Caco-2 (cell line): ENCODE measurements at regions of chr12 and their contacts with region 1.

Region 1: DNA sequence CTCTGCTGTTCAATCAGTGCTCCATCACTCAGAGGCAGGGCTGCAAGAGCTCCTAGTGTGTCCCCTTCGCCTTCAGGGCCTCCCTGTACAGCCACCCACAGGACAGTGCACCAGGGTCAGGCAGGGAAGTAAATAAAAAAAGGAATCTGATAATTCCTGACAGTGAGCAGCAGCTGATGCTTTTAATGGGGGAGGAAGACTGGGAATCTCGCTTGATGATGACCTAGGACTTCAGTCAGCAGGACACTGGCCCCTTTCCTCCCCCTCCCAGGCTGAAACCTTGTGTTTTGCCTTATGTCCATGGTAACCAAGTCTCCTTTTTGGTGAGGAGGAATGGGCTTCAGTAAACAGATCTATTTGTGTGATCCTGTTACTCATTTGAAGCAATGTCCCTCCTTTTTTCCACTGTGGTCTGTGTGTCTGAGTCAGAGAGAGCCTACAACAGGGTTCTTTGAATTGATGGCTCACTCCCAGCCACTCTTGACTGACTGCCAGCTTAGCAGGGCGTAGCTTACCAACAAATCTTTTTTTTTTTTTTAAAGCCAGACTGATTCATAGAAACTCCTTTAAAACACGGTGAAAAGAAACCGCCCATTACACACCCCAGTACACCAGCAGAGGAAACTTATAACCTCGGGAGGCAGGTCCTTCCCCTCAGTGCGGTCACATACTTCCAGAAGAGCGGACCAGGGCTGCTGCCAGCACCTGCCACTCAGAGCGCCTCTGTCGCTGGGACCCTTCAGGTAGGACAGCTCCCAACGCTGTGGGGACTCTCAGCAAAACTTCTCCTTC is at the start of gene EMP1:
- DNase-seq: peak; percentile 67 to 83
- H3K4me3 ChIP-seq: no peak within 1 kb of the TSS
- H3K4me3 Mint-ChIP-seq: peak within 1 kb of the TSS; percentile 50
- H3K27ac Mint-ChIP-seq: peak within 1 kb of the TSS; percentile 28
- H3K4me1 ChIP-seq: peaks cover 47% of the 10 kb centered on the region
- H3K4me1 Mint-ChIP-seq: peaks cover 43% of the 10 kb centered on the region
- H3K27me3 ChIP-seq: no peaks in the 10 kb centered on the region
- H3K27me3 Mint-ChIP-seq: no peaks in the 10 kb centered on the region
- CTCF ChIP-seq: no peak
- total RNA-seq, gene EMP1: 6.6 and 10.2 TPM in 2 replicates

Region 2: GRCh38 chr12:12403264-12404248 is 792.8 kb before region 1 on chr12:
- CTCF ChIA-PET with region 1: no interaction called
- POLR2A ChIA-PET with region 1: no interaction called
- intact Hi-C with region 1: no loop called
- DNase-seq: peak; percentile 96 to 97
- H3K4me3 ChIP-seq: no peak overlapping the region
- H3K4me3 Mint-ChIP-seq: peak overlapping the region; percentile 54
- H3K27ac Mint-ChIP-seq: peak overlapping the region; percentile 94
- H3K4me1 ChIP-seq: peaks cover 61% of the 10 kb centered on the region
- H3K4me1 Mint-ChIP-seq: peaks cover 60% of the 10 kb centered on the region
- H3K27me3 ChIP-seq: no peaks in the 10 kb centered on the region
- H3K27me3 Mint-ChIP-seq: no peaks in the 10 kb centered on the region
- CTCF ChIP-seq: no peak

Region 3: DNA sequence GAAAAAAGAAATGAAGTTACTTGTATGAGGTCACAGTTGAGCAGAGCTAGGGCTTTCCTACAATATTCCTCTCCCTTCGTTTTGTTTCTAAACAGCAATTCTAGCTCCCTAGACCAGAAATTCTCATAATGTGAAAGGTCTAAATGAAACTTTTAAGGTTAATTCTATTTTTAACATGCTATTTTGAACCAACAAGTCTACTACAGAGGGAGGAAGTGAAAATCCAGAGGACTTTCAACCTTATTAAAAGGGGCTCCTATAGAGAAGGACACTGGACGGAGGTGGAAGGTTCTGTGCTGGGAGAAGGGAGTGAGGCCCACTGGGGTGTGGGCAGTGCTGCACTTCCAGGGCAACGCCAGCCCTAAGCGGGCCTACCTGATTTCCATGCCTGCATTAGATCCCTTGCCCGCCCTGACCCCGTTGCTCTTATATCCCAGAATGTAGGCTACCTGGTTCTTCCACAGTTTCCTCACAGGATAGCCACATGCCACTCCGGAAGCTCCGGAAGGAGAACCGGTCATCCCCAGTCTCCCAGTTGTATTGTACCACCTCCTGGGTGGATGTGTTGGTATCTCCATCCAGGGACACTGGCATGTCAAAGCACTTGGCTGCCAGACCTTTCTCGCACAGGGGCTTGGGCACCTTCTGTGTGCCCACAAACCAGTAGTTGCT is 106.1 kb before region 1 on chr12:
- CTCF ChIA-PET with region 1: no interaction called
- POLR2A ChIA-PET with region 1: no interaction called
- intact Hi-C with region 1: no loop called
- DNase-seq: no peak
- H3K4me3 ChIP-seq: no peak overlapping the region
- H3K4me3 Mint-ChIP-seq: no peak overlapping the region
- H3K27ac Mint-ChIP-seq: no peak overlapping the region
- H3K4me1 ChIP-seq: peaks cover 6% of the 10 kb centered on the region
- H3K4me1 Mint-ChIP-seq: peaks cover 6% of the 10 kb centered on the region
- H3K27me3 ChIP-seq: no peaks in the 10 kb centered on the region
- H3K27me3 Mint-ChIP-seq: no peaks in the 10 kb centered on the region
- CTCF ChIP-seq: no peak

Region 4: DNA sequence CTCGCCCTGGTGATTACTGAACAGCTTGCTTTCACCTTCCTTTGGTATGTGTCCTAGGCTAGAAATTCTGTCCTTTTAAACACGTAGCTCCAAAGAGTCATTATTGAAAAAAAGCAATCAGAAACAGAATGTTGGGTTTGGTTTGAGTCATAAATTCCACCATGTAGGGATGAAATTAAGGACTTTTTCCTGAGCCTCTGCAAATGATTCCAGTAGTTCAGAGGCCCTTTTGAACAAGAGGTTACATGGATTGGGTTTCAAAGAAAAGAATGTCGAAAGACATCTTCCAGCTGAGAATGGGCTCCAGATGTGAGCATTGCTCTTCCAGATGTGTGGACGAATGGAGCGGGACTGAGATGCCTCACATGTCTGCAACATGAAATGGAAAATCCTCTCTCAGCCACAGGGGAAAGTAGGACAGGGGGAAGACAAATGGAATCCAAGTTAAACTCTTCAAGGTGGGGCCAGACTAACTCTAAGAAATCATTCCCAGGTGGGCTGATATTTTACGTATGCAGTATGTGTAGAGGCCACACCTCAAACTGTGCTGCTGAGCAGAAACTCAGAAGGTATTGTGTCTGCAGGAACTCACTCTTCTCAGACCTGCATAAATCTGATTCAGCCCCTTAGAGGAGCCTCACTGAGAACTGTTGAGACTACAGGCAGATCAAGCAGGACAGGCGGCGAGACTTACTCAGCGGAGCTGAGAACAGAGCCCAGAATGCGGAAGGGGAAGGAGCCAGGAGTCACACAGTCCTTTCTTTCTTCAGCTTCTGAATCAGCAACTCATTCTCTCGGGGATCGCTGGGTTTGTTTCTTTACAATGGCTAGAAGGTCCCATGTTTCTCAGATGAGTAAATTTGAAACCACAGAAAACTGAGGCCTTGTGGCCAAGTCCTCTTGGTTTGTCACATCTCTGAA is 23.1 kb before region 1 on chr12:
- CTCF ChIA-PET with region 1: no interaction called
- POLR2A ChIA-PET with region 1: interaction called, 3 read pairs
- intact Hi-C with region 1: loop called (anchors 2 kb)
- DNase-seq: no peak
- H3K4me3 ChIP-seq: no peak overlapping the region
- H3K4me3 Mint-ChIP-seq: no peak overlapping the region
- H3K27ac Mint-ChIP-seq: peak overlapping the region; percentile 43
- H3K4me1 ChIP-seq: peaks cover 35% of the 10 kb centered on the region
- H3K4me1 Mint-ChIP-seq: peaks cover 50% of the 10 kb centered on the region
- H3K27me3 ChIP-seq: no peaks in the 10 kb centered on the region
- H3K27me3 Mint-ChIP-seq: no peaks in the 10 kb centered on the region
- CTCF ChIP-seq: no peak

Region 5: DNA sequence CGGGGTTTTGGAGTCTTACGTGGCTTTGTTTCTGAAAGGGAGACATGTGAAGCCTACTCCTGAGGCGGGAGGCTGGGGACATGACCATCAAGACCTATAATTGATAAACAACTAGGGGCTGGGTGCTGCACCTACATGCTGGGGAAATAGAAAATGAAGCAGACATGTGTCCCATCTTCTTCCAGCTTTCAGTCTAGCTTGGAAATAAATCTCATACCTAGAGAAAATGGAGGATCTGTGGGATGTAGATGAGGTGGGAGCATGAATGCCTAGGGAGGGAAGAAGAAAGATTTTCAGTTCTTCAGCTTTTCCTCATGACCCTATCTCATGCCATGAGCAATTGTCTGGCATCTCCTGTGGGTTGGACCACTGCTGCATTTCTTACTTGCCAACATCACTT is 22.3 kb after region 1 on chr12:
- CTCF ChIA-PET with region 1: no interaction called
- POLR2A ChIA-PET with region 1: no interaction called
- intact Hi-C with region 1: no loop called
- DNase-seq: no peak
- H3K4me3 ChIP-seq: no peak overlapping the region
- H3K4me3 Mint-ChIP-seq: no peak overlapping the region
- H3K27ac Mint-ChIP-seq: no peak overlapping the region
- H3K4me1 ChIP-seq: peaks cover 10% of the 10 kb centered on the region
- H3K4me1 Mint-ChIP-seq: peaks cover 14% of the 10 kb centered on the region
- H3K27me3 ChIP-seq: no peaks in the 10 kb centered on the region
- H3K27me3 Mint-ChIP-seq: no peaks in the 10 kb centered on the region
- CTCF ChIP-seq: no peak

Region 6: GRCh38 chr12:14868920-14869506 is 1672.7 kb after region 1 on chr12:
- CTCF ChIA-PET with region 1: no interaction called
- POLR2A ChIA-PET with region 1: no interaction called
- intact Hi-C with region 1: no loop called
- DNase-seq: no peak
- H3K4me3 ChIP-seq: no peak overlapping the region
- H3K4me3 Mint-ChIP-seq: no peak overlapping the region
- H3K27ac Mint-ChIP-seq: no peak overlapping the region
- H3K4me1 ChIP-seq: no peaks in the 10 kb centered on the region
- H3K4me1 Mint-ChIP-seq: no peaks in the 10 kb centered on the region
- H3K27me3 ChIP-seq: no peaks in the 10 kb centered on the region
- H3K27me3 Mint-ChIP-seq: peaks cover 10% of the 10 kb centered on the region
- CTCF ChIP-seq: no peak